Heart right ventricle (tissue), 16 donors: ENCODE measurements at regions of chr12 and their contacts with region 1.

Region 1: GRCh38 chr12:95755261-95755865 is 35.2 kb downstream of the NTN4 start:
- DNase-seq: peak in 1 of 2 donors; percentile 63
- ATAC-seq: peak; percentile 89 to 97 (median 96)
- H3K4me3 ChIP-seq: peak overlapping the region in 7 of 10 donors; percentile 13 to 42 (median 31)
- H3K27ac ChIP-seq: peak overlapping the region; percentile 5 to 85 (median 74)
- H3K4me1 ChIP-seq: peaks cover 0 to 33% (median 10%) of the 10 kb centered on the region in 9 donors
- H3K27me3 ChIP-seq: no peaks in the 10 kb centered on the region
- CTCF ChIP-seq: peak in 2 of 9 donors; percentile 10

Region 2: DNA sequence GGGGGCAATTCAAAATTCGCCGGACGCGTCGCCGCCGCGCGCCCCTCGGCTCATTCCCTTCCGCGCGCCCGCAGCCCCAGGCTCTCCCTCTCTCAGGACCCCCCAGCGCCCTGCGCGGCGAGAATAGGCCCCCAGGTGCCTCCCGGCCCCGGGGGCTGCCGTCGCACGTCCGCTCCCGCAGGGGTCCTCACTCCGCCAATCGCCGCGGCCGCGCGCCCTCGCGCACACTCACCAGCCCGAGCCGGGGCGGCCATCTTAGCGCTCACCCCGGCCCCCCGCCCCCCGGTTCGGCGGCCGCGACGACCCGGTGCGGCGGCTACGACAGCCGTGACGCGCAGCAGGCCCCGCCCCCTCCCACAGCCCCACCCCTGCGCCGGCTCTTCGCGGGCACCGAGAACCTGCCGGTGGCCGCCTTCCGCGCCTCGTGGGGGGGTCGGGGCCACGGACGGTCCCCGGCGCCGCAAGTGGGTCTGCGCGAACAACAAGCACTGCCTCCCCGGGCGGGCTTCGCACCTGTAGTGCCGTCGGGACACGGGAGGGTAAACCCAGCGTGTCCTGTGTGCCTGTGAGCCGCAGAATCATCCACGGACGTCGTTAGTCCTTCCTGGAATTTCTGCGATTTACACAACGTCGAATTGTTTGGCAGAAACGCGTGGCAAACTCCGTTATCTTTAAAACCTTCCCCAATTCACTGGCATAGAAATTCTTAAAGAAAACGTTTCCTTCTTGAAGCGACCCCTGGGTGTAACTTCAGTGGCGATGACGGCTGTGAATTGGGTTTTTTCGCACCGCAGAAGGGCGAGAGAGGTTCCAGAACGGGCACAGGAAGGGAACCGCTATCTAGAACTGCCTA is 206.6 kb before region 1 on chr12:
- intact Hi-C with region 1: no loop called
- DNase-seq: peak; percentile 20 to 48
- ATAC-seq: peak; percentile 75 to 91 (median 83)
- H3K4me3 ChIP-seq: peak overlapping the region; percentile 53 to 83 (median 75)
- H3K27ac ChIP-seq: peak overlapping the region in 4 of 10 donors; percentile 31 to 53 (median 38)
- H3K4me1 ChIP-seq: peaks cover 0 to 14% (median 9%) of the 10 kb centered on the region in 9 donors
- H3K27me3 ChIP-seq: peaks cover 0 to 55% (median 18%) of the 10 kb centered on the region in 7 donors
- CTCF ChIP-seq: no peak

Region 3: DNA sequence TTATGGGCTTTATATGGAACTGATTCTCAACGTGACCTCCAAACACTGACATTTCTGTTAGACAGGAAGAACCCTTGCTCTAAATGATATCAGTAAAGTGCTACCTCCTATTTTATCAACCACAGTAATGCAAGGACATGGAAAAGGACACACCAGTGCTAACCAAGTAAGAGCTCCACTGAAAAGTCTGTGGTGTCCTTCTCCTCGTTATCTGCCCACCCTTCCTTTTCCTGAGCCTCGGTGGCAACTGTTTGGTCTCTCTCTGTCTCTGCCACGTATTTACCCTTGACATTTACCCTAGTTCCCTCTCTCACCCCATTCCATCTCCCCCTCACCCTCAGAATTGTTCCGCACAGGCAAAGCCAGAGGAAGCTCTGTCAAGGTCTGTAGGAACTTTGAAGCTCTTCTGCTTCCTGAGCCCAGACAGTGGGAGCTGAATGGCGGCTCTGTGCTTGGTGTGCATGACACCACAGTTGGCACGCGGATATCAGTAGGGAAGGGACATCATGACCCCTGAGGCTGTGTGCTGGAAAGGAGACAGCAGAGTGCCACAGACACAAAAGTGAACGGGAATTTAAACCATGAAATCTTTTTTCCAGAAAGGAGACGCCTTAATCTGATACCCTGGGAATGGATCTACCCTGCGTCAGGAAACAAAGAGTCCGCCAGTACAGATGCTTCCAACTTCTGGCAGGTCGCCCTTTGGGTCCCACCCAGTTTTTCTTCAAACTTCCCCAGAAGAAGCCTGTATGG is 15.6 kb before region 1 on chr12:
- intact Hi-C with region 1: loop called in 1 of 10 experiments (anchors 2 kb)
- DNase-seq: peak; percentile 67 to 71
- ATAC-seq: peak; percentile 70 to 92 (median 89)
- H3K4me3 ChIP-seq: peak overlapping the region in 3 of 10 donors; percentile 0 to 14 (median 4)
- H3K27ac ChIP-seq: peak overlapping the region; percentile 70 to 94 (median 87)
- H3K4me1 ChIP-seq: peaks cover 14 to 83% (median 43%) of the 10 kb centered on the region in 9 donors
- H3K27me3 ChIP-seq: no peaks in the 10 kb centered on the region
- CTCF ChIP-seq: no peak